ENCODE measurements at regions of chr17 and their contacts with region 1.

Region 1: GRCh38 chr17:68398691-68399637 is 58.3 kb downstream of the WIPI1 start:
- DNase-seq: peak; percentile 49
- H3K4me3 Mint-ChIP-seq: no peak overlapping the region
- H3K27ac Mint-ChIP-seq: peak overlapping the region; percentile 79
- H3K4me1 Mint-ChIP-seq: peaks cover 40% of the 10 kb centered on the region
- H3K27me3 Mint-ChIP-seq: no peaks in the 10 kb centered on the region

Region 2: GRCh38 chr17:68310152-68310551 is 88.8 kb before region 1 on chr17:
- CTCF ChIA-PET with region 1: interaction called, 10 read pairs
- POLR2A ChIA-PET with region 1: interaction called, 5 read pairs
- DNase-seq: peak; percentile 56
- H3K4me3 Mint-ChIP-seq: no peak overlapping the region
- H3K27ac Mint-ChIP-seq: peak overlapping the region; percentile 23
- H3K4me1 Mint-ChIP-seq: peaks cover 56% of the 10 kb centered on the region
- H3K27me3 Mint-ChIP-seq: no peaks in the 10 kb centered on the region

Region 3: DNA sequence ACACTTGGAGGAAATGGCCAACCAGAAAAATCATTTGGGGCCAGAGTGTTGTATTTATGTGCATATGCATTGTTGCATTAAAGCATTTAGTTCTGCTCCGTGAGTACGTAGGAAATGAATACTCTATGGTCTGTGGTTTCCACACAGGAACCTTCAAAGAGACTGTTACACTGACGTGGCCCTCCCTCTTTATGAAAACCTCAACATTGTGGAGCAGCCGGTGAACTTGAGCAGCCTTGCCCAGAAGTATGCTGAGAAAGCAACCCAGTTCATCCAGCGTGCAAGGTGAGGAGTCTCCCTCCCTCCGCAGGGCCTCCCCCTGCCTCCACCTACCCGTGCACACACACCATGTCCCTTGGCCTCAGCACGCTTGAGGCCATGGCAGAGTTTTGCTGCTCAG is 42.4 kb before region 1 on chr17:
- CTCF ChIA-PET with region 1: interaction called, 19 read pairs
- POLR2A ChIA-PET with region 1: interaction called, 13 read pairs
- DNase-seq: peak; percentile 85
- H3K4me3 Mint-ChIP-seq: peak overlapping the region; percentile 66
- H3K27ac Mint-ChIP-seq: peak overlapping the region; percentile 96
- H3K4me1 Mint-ChIP-seq: peaks cover 71% of the 10 kb centered on the region
- H3K27me3 Mint-ChIP-seq: no peaks in the 10 kb centered on the region

Region 4: GRCh38 chr17:68383443-68384321 is 15.3 kb before region 1 on chr17:
- CTCF ChIA-PET with region 1: interaction called, 14 read pairs
- POLR2A ChIA-PET with region 1: interaction called, 5 read pairs
- DNase-seq: peak; percentile 37
- H3K4me3 Mint-ChIP-seq: no peak overlapping the region
- H3K27ac Mint-ChIP-seq: peak overlapping the region; percentile 5
- H3K4me1 Mint-ChIP-seq: peaks cover 23% of the 10 kb centered on the region
- H3K27me3 Mint-ChIP-seq: no peaks in the 10 kb centered on the region

Region 5: DNA sequence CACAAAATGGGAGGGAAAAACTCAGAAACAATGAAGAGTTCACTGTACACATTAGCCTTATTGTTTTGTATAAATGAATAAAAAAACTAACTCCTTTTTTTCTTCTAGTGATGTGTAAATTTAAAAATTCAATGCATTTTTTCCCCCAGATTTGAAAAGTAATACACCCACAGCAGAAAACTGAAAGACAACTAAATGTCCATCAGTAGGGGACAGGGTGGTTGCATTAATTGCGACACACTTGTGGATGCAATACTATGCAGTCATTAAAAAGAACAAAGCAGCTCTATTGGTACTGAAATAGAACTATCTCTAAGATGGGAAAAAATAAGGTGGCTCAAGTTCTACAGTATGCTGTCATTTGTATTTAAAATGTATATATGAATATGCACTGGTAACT is 72.0 kb after region 1 on chr17:
- CTCF ChIA-PET with region 1: no interaction called
- POLR2A ChIA-PET with region 1: no interaction called
- DNase-seq: no peak
- H3K4me3 Mint-ChIP-seq: no peak overlapping the region
- H3K27ac Mint-ChIP-seq: no peak overlapping the region
- H3K4me1 Mint-ChIP-seq: peaks cover 2% of the 10 kb centered on the region
- H3K27me3 Mint-ChIP-seq: peaks cover 35% of the 10 kb centered on the region

Region 6: DNA sequence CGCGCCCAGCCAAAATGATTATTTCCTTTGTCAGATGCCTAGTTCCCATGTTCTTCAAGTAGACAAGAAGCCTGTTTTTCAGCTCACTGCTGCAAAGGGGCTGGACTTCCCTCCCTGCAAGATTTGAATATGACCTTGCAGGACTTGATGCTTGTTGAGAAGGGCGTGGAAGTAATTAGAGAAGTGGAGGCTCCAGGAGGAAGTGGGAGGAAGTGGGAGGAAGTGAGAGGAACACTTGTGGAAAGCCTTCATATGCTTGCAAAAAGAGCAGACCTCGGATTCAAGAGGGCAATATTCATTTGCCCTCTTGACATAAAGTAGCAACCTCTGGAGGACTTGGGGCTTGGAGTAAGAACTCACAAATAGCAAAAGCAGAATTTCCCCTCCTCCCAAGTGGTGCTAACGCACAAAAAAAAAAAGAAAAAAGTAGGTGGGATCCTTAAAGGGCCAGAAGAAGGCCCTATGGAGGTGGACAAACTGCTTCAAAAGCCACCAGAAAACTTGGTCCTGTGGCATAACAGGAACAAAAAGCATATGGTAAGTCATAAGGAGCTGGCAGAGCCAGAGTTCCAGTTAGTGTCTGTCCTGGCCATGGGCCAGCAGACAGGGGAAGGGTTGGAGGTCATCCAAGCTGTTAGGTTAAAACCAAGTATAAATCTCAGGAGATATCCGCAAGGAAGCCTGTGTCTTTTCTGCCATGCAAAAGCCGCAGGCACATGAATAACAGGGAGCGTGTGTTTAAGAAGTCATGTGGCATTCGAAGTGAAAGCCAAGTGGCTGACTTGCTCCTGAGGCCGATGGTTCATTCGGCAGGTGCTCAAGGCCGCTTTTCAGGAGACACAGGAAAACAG is 92.6 kb after region 1 on chr17:
- CTCF ChIA-PET with region 1: no interaction called
- POLR2A ChIA-PET with region 1: no interaction called
- DNase-seq: no peak
- H3K4me3 Mint-ChIP-seq: no peak overlapping the region
- H3K27ac Mint-ChIP-seq: no peak overlapping the region
- H3K4me1 Mint-ChIP-seq: peaks cover 23% of the 10 kb centered on the region
- H3K27me3 Mint-ChIP-seq: peaks cover 11% of the 10 kb centered on the region

Measured in activated CD4-positive, alpha-beta memory T cell treated with anti-CD3 and anti-CD28 coated beads, Interleukin-2, amount 10 ng/mL, durations not matched to agents 7 days and 5 days (primary cell).